Right ventricle myocardium superior (tissue), 1 donor: ENCODE measurements at regions of chr1 and their contacts with region 1.

Region 1: GRCh38 chr1:33633019-33633801 is 160.8 kb downstream of the ZSCAN20 start:
- DNase-seq: peak; percentile 89
- ATAC-seq: peak; percentile 92

Region 2: DNA sequence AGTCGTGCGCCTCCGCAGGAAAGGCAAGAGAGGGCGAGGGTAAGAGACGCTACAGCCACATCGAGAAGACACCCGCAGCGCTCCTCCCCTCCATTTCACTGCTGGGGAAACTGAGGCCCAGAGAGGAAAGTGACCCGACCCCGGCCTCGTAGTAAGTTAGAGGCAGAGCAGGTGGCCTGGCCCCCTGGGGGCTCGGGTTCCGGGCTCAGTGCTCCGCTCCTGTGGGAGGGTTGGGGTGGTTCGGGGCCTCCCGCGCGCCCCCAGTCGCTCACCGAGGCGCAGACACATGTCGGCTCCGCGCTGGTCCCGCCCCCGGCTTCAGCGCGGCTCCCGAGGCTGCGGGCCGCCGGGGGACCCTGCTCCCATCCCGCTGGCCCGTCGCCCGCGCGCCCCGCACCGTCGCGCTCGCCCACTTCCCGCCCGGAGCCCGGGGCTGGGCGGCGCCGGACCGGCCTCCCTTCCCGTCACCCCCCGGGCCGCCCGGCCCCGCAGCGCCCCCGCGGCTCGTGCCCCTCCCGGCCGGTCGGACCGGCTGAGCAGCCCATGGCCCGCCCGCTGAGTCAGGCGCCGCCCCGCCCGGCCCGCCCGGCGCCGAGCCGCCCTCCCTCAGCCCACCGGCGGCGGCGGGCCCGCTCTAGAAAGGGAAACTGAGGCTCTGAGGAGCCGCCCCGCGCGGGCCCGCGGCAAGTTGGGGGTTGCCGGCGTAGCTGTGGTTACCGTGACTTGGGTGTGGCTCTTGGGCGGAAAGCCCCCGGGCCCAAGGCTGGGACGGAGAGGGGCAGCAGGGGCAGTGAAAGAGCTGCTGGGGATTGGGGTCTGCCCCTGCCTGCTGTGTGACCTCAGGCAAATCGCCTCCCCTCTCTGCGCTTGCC is 732.0 kb before region 1 on chr1 and contains the start of gene TMEM54:
- intact Hi-C with region 1: no loop called
- DNase-seq: peak; percentile 64
- ATAC-seq: peak; percentile 86
- total RNA-seq, gene TMEM54: 10.5 TPM

Region 3: GRCh38 chr1:33575324-33575879 is 57.8 kb before region 1 on chr1:
- intact Hi-C with region 1: no loop called
- DNase-seq: peak; percentile 50
- ATAC-seq: peak; percentile 91

Region 4: GRCh38 chr1:34597877-34598514 is 964.8 kb after region 1 on chr1:
- intact Hi-C with region 1: loop called (anchors 10 kb)
- DNase-seq: peak; percentile 57
- ATAC-seq: peak; percentile 69